ENCODE measurements at regions of chr2 and their contacts with region 1.

Region 1: GRCh38 chr2:120287183-120288015 is 34.7 kb downstream of the RALB start:
- DNase-seq: peak; percentile 63
- ATAC-seq: peak; percentile 97
- H3K4me3 Mint-ChIP-seq: no peak overlapping the region
- H3K27ac Mint-ChIP-seq: peak overlapping the region; percentile 79
- H3K4me1 Mint-ChIP-seq: peaks cover 29% of the 10 kb centered on the region
- H3K27me3 Mint-ChIP-seq: no peaks in the 10 kb centered on the region

Region 2: GRCh38 chr2:119491808-119492533 is 795.4 kb before region 1 on chr2:
- CTCF ChIA-PET with region 1: no interaction called
- POLR2A ChIA-PET with region 1: no interaction called
- intact Hi-C with region 1: no loop called
- DNase-seq: no peak
- ATAC-seq: no peak
- H3K4me3 Mint-ChIP-seq: no peak overlapping the region
- H3K27ac Mint-ChIP-seq: no peak overlapping the region
- H3K4me1 Mint-ChIP-seq: no peaks in the 10 kb centered on the region
- H3K27me3 Mint-ChIP-seq: peaks cover 17% of the 10 kb centered on the region

Region 3: GRCh38 chr2:119820275-119820674 is 467.1 kb before region 1 on chr2:
- CTCF ChIA-PET with region 1: no interaction called
- POLR2A ChIA-PET with region 1: no interaction called
- intact Hi-C with region 1: no loop called
- DNase-seq: no peak
- ATAC-seq: no peak
- H3K4me3 Mint-ChIP-seq: no peak overlapping the region
- H3K27ac Mint-ChIP-seq: no peak overlapping the region
- H3K4me1 Mint-ChIP-seq: peaks cover 42% of the 10 kb centered on the region
- H3K27me3 Mint-ChIP-seq: no peaks in the 10 kb centered on the region

Region 4: DNA sequence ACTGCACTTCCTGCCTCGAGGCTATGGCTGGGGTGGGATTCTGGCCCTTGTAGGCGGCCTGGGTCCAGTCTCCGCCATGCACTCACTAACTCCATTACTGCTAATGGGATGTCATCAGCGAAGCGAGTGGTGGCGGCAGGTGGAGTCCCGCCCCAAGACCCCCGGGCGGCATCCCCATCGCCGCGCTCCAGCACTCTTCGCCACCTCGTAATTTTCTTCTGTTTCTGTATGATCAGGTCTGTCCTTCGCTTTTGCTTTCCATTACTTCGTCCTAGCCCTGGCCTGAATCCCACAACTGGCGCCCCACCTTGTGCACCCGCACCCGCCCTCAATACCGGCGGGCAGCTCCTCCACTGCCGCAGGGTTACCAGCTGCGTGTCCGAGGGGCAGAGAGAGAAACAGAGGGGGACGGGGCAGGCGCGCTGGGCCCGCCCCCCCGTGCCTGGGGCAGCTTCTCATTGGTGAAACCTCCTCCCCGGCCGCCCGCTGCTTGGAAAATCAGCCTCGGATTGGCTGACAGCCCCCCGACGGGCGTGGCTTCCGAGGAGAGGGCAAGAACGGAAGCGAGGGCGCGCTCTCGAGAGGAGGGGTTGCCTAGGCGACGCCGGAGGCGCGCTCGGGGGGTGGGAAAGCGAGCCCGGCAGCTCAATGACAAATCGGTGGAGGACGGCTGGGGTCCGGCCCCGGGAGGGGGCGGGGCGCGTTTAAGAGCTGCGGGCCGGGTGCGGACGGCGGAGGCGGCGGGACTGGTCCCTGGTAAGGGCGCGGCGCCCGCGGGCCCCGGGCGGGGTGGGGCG is 35.0 kb before region 1 on chr2 and contains the start of gene RALB:
- CTCF ChIA-PET with region 1: interaction called, 4 read pairs
- POLR2A ChIA-PET with region 1: interaction called, 4 read pairs
- intact Hi-C with region 1: loop called (anchors 1 kb)
- DNase-seq: peak; percentile 100
- ATAC-seq: peak; percentile 95
- H3K4me3 Mint-ChIP-seq: peak within 1 kb of the TSS; percentile 92
- H3K27ac Mint-ChIP-seq: peak within 1 kb of the TSS; percentile 86
- H3K4me1 Mint-ChIP-seq: peaks cover 41% of the 10 kb centered on the region
- H3K27me3 Mint-ChIP-seq: peaks cover 6% of the 10 kb centered on the region
- total RNA-seq, gene RALB: 34.0 to 34.3 TPM

Region 5: DNA sequence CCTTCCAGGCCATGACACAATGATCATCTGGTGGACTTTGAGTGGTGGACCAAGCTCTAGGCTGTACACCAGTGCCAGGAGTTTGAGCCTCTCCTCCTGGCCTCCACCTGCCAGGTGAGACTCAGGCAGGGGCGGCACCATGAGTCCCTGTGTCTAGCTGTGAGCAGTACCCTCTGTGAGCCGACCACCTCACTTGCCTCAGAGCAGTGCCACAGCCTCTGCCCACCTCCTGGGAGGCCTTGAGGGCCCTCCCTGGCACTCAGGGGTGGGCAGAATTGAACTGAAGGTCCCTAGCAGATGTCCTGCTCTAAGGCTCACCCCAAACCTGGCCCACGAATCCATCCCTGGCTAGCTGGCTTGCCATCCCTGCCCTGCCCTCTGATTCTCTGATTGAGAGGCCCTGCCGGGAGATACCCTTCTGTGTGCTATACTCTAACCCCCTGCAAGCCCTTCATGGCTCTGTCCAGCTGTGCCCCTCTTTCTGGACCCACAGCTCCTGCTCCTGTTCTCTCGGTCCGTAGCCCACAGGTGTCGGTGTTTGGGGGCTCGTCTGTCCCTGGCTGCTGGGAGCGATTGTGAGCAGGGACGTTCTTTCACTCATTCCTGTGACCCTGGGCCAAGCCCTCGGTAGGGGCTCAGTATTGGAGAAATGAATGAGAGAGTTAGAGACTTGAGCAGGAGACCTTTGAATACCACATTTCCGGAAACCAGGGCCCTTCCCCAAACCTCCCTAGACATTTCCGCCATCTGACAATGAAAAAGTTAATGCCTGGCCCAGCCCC is 128.5 kb after region 1 on chr2:
- CTCF ChIA-PET with region 1: no interaction called
- POLR2A ChIA-PET with region 1: no interaction called
- intact Hi-C with region 1: no loop called
- DNase-seq: no peak
- ATAC-seq: no peak
- H3K4me3 Mint-ChIP-seq: no peak overlapping the region
- H3K27ac Mint-ChIP-seq: no peak overlapping the region
- H3K4me1 Mint-ChIP-seq: no peaks in the 10 kb centered on the region
- H3K27me3 Mint-ChIP-seq: peaks cover 9% of the 10 kb centered on the region

Measured in activated CD4-positive, alpha-beta T cell treated with anti-CD3 and anti-CD28 coated beads for 36 hours (primary cell).